Naive thymus-derived CD8-positive, alpha-beta T cell (primary cell): ENCODE measurements at regions of chr9 and their contacts with region 1.

Region 1: DNA sequence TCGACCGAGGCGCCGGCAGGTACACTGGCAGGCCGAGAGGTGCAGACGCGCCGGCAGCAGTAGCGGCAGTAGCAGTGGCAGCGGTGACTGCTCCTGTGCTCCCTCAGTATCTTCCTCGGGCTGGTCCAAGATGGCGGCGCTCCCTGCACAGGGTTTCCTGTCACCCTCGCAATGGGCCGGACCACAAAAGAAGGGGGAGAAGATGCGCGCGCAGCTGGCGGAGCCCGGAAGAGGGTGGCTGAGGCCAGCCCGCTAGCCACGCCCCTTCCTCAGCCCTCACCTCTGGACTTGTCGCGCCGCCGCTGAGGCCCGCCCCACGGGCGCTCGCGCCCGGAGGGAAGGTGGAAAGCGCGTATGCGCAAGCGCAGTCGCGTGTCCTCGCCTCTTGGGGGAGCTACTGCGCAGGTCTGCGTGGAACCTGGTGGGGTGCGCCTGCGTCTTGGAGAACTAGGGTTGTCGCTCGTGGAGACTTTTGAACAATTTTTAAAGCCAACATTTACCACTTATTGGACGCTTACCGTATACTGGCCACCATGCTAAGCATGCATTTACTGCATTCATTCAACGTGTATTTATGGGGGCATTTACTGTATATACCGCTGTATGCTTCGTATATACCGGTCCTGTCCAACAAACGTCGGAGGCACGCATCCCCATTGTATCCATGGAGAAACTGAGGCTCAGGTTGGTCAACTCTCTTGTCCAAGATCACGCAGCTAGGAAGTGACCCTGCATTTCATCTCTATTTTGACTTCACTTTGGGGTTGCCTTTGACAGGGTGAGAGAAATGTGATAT is at the start of gene RAB14:
- DNase-seq: peak; percentile 99 to 100 (median 100)
- ATAC-seq: peak; percentile 87
- H3K4me3 Mint-ChIP-seq: peak within 1 kb of the TSS; percentile 78 to 98 (median 94)
- H3K27ac Mint-ChIP-seq: peak within 1 kb of the TSS; percentile 89 to 99 (median 98)
- H3K4me1 Mint-ChIP-seq: peaks cover 21 to 62% (median 42%) of the 10 kb centered on the region in 4 donors
- H3K27me3 Mint-ChIP-seq: no peaks in the 10 kb centered on the region
- polyA plus RNA-seq, gene RAB14: 34.6 to 37.2 (median 36.8) TPM

Region 2: GRCh38 chr9:121213136-121213806 is 11.3 kb after region 1 on chr9:
- POLR2A ChIA-PET with region 1: interaction called, 10 read pairs
- DNase-seq: peak; percentile 33 to 77 (median 52)
- ATAC-seq: peak; percentile 59 to 78
- H3K4me3 Mint-ChIP-seq: no peak overlapping the region
- H3K27ac Mint-ChIP-seq: peak overlapping the region in 4 of 10 donors; percentile 25 to 47 (median 38)
- H3K4me1 Mint-ChIP-seq: peaks cover 2 to 12% (median 5%) of the 10 kb centered on the region in 4 donors
- H3K27me3 Mint-ChIP-seq: no peaks in the 10 kb centered on the region

Region 3: DNA sequence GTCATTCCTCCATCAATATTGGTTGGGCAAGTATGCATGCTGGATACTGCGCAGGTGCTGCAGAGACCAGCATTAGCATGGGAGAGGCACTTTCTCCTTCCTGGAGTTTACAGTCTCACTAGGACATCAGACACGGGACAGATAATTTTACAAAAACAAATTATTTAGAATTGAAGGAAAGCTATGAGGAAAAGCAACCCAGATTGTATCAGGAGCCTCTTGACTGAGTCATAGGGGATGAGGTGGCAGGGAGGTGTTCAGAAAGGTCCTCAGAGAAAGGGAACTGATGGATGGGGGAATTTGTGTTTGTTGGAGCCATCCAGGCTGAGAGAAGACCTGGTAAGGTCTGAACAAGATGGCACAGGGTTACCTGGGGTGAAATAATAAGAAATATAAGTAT is 24.2 kb after region 1 on chr9:
- POLR2A ChIA-PET with region 1: no interaction called
- DNase-seq: no peak
- ATAC-seq: no peak
- H3K4me3 Mint-ChIP-seq: no peak overlapping the region
- H3K27ac Mint-ChIP-seq: no peak overlapping the region
- H3K4me1 Mint-ChIP-seq: peaks cover 0 to 4% (median under 1%) of the 10 kb centered on the region in 4 donors
- H3K27me3 Mint-ChIP-seq: no peaks in the 10 kb centered on the region